ENCODE measurements at regions of chr14 and their contacts with region 1.

Region 1: GRCh38 chr14:61662437-61663311 is 32.6 kb upstream of the HIF1A start:
- DNase-seq: peak; percentile 99
- ATAC-seq: peak; percentile 81
- H3K4me3 ChIP-seq: peak overlapping the region; percentile 34; the same call in 1 of the 2 replicates
- H3K27ac ChIP-seq: peak overlapping the region; percentile 89
- H3K4me1 ChIP-seq: peaks cover 60% of the 10 kb centered on the region
- H3K27me3 ChIP-seq: no peaks in the 10 kb centered on the region
- CTCF ChIP-seq: no peak

Region 2: DNA sequence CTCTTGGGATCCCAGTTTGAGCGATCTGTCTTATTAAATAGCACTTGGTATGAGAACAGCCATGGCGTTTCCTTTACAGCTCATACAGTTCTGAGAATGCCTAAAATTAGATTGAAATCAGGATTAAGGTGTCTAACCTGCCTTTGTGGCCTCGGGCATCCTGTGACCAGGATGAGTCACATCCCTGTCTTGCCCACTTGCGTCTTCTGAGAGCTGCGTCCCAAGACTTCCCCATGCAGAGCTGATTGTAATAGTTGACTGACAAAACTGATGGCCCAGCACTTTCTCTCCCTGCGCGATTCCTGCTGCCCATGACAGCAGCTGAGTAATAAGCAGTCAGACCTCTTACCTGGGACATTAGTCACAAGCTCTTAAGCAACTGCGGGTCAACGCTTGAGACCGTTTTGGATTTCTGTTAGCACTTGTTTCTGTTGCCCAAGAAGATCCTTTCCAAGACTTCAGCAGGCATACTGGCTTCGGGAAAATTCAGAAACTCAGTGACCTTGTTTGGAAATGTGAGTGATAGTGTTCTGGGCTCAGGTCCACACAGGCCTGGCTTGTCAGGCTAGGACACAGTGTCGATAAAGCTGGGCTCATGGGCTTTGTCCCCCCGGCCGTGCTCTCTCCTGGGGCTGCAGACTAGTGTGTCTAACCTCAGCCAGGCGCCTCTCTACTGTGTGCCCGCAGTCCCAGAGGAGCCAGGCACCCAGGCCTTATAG is 137.2 kb before region 1 on chr14:
- CTCF ChIA-PET with region 1: no interaction called
- POLR2A ChIA-PET with region 1: interaction called, 4 read pairs
- intact Hi-C with region 1: loop called (anchors 1 kb)
- DNase-seq: peak; percentile 100
- ATAC-seq: peak; percentile 73
- H3K4me3 ChIP-seq: peak overlapping the region; percentile 27; the same call in 1 of the 2 replicates
- H3K27ac ChIP-seq: peak overlapping the region; percentile 95
- H3K4me1 ChIP-seq: peaks cover 66% of the 10 kb centered on the region
- H3K27me3 ChIP-seq: no peaks in the 10 kb centered on the region
- CTCF ChIP-seq: no peak

Region 3: DNA sequence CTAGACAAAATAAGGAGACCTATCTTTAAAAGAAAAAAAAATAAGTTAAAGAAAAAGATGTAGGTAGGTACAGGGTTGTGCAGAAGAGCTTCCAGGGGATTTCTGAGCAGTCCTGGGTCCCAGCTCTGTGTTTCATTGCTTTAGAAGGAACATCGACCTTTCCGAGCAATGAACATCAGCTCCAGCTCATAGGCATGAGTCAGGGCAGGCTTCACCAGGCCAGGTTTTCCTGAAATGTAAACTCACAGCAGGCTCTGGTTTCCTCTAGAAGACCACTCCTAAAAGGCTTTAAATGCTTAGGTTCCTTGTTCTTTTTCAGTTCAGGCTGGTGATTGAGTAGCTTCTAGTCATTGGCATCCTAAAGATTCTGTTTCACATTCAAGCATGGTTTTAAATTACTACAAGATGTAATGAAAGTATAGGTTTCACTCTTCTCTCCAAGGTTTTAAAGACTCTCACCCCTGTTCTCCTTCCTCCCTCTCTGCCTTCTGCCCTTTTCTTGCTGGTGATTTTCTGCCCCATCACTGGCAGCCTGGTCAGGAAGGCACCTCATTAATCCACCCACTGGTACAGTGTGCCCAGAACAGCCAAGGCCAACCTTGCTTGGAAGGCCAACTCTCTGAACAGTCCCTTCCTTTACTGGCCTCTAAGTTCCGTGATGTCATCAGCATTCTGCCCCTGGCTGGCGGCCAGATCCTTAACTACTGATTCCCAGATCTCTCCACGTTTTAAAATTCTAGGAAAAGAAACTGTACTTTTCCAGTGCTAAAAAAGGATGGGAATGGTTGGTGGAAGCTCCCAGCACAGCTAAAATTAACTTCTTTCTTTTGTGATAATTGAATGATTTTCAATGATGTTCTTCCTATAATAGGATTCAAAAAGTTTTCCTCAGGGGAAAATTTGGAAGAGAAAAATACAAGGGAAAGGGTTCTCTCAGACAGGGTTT is 76.8 kb before region 1 on chr14:
- CTCF ChIA-PET with region 1: no interaction called
- POLR2A ChIA-PET with region 1: no interaction called
- intact Hi-C with region 1: loop called (anchors 1 kb)
- DNase-seq: peak; percentile 79
- ATAC-seq: peak; percentile 62
- H3K4me3 ChIP-seq: peak overlapping the region; percentile 9; the same call in 1 of the 2 replicates
- H3K27ac ChIP-seq: peak overlapping the region; percentile 93
- H3K4me1 ChIP-seq: peaks cover 34% of the 10 kb centered on the region
- H3K27me3 ChIP-seq: no peaks in the 10 kb centered on the region
- CTCF ChIP-seq: no peak

Region 4: GRCh38 chr14:61631045-61631687 is 31.5 kb before region 1 on chr14:
- CTCF ChIA-PET with region 1: interaction called, 4 read pairs
- POLR2A ChIA-PET with region 1: interaction called, 3 read pairs
- intact Hi-C with region 1: loop called (anchors 2 kb)
- DNase-seq: peak; percentile 34
- ATAC-seq: peak; percentile 81
- H3K4me3 ChIP-seq: no peak overlapping the region
- H3K27ac ChIP-seq: peak overlapping the region; percentile 15
- H3K4me1 ChIP-seq: peaks cover 17% of the 10 kb centered on the region
- H3K27me3 ChIP-seq: no peaks in the 10 kb centered on the region
- CTCF ChIP-seq: no peak

Region 5: DNA sequence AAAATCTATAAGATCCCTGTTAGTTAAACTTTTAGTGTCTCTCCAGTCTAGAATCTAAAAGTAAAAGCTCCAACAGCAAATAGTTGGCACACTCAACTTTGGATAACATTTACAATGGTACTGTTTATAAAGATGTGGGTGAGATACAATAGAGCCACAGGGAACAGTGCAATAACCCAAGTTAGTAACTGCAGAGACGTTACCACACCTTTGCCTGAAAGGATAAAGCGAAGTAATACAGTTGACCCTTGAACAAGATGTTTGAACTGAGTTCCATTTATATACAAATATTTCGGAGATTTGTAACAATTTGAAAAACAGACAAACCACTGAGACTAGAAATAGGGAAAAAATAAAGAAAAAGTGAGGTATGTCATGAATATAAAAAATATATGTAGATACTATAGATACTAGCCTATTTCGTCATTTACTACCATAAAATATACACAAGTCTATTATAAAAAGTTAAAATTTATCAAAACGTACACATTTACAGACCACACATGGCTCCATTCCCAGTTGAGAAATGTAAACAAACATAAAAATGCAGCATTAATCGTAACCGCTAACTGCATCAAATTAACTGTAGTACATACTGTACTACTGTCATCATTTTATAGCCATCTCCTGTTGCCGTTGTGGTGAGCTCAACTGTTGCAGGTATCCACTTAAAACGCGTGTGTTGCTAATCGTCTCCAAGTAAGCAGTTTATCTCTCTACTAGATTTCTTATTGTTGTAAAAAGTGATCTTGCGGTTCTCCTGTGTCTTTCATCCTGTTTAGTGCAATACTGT is 23.9 kb before region 1 on chr14:
- CTCF ChIA-PET with region 1: no interaction called
- POLR2A ChIA-PET with region 1: no interaction called
- intact Hi-C with region 1: loop called (anchors 2 kb)
- DNase-seq: peak; percentile 92
- ATAC-seq: peak; percentile 90
- H3K4me3 ChIP-seq: 0 out of 2 replicates have a peak overlapping the region, but pooled peaks have one; percentile 3
- H3K27ac ChIP-seq: peak overlapping the region; percentile 75
- H3K4me1 ChIP-seq: peaks cover 36% of the 10 kb centered on the region
- H3K27me3 ChIP-seq: no peaks in the 10 kb centered on the region
- CTCF ChIP-seq: no peak

Measured in PC-3 (cell line).